B cell (primary cell): ENCODE measurements at regions of chr2 and their contacts with region 1.

Region 1: DNA sequence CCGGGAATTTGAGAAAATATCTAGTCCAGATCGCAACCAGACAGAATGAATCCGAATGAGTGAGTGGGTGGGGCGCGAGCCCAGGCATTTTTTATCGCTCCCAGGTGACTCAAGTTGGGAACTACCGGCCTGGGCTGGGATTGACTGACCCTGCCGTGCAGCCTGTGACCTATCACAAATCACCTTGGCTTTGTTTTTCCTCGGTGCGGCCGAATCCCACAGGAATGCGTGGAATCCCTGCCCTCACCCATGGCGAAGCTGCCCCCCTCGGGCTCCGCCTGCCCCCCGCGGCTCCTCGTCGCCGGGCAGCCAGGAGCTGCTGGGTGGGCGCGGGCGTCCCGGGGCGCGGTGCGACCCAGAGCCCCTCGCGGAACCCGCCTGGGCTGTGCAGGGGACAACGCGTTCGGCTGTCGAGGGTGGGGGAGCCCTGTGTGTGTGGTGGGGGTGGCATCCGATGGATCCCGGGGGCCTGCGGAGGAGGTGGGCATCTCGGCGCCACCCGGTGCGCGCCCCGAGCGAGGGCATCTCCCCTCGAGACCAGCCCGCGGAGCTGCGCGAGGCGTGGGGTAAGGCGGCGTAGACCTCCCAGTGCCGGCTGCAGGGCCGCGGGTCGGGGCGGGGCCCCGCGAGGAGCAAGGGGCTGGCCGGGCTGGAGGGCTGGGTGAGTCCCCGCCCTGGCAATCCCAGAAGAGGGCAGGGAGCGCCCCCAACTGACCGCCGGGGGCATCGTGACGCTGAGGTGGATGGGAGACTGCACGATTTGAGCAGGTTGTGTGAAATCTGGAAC is 16.5 kb downstream of the B3GNT7 start:
- DNase-seq: peak; percentile 88
- ATAC-seq: peak; percentile 100
- H3K4me3 ChIP-seq: peak overlapping the region in 4 of 5 experiments; percentile 10 to 62 (median 52)
- H3K4me3 Mint-ChIP-seq: peak overlapping the region; percentile 80
- H3K27ac ChIP-seq: no peak overlapping the region
- H3K27ac Mint-ChIP-seq: no peak overlapping the region
- H3K4me1 ChIP-seq: peaks cover 12 to 13% of the 10 kb centered on the region in 2 donors
- H3K4me1 Mint-ChIP-seq: peaks cover 7% of the 10 kb centered on the region
- H3K27me3 ChIP-seq: peaks cover 0 to 24% (median 10%) of the 10 kb centered on the region in 4 experiments
- H3K27me3 Mint-ChIP-seq: peaks cover 21% of the 10 kb centered on the region
- CTCF ChIP-seq: peak; percentile 87

Region 2: GRCh38 chr2:231104115-231104713 is 307.8 kb before region 1 on chr2:
- CTCF ChIA-PET with region 1: interaction called, 60 read pairs
- POLR2A ChIA-PET with region 1: no interaction called
- intact Hi-C with region 1: loop called (anchors 1 kb)
- DNase-seq: peak; percentile 73
- ATAC-seq: peak; percentile 69
- H3K4me3 ChIP-seq: no peak overlapping the region
- H3K4me3 Mint-ChIP-seq: no peak overlapping the region
- H3K27ac ChIP-seq: no peak overlapping the region
- H3K27ac Mint-ChIP-seq: no peak overlapping the region
- H3K4me1 ChIP-seq: no peaks in the 10 kb centered on the region
- H3K4me1 Mint-ChIP-seq: no peaks in the 10 kb centered on the region
- H3K27me3 ChIP-seq: no peaks in the 10 kb centered on the region
- H3K27me3 Mint-ChIP-seq: no peaks in the 10 kb centered on the region
- CTCF ChIP-seq: peak; percentile 87

Region 3: DNA sequence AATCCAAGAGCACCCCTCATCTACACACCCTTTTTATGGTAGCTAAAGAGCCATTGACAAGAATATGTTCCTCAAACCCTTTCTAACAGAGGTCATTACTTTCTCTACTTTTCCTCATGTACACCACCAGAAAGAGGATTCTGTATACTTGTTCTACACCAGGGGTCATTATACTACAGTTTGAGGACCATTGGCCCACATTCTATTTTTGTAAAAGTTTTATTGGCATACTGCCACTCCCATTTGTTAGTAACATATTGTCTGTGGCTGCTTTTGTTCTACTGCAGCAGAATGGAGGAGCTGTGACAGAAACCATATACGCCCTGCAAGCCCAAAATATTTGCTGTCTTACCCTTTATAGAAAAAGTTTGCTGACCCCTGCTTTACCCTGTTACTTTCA is 301.5 kb before region 1 on chr2:
- CTCF ChIA-PET with region 1: interaction called, 10 read pairs
- POLR2A ChIA-PET with region 1: no interaction called
- intact Hi-C with region 1: no loop called
- DNase-seq: no peak
- ATAC-seq: no peak
- H3K4me3 ChIP-seq: no peak overlapping the region
- H3K4me3 Mint-ChIP-seq: no peak overlapping the region
- H3K27ac ChIP-seq: no peak overlapping the region
- H3K27ac Mint-ChIP-seq: no peak overlapping the region
- H3K4me1 ChIP-seq: no peaks in the 10 kb centered on the region
- H3K4me1 Mint-ChIP-seq: no peaks in the 10 kb centered on the region
- H3K27me3 ChIP-seq: no peaks in the 10 kb centered on the region
- H3K27me3 Mint-ChIP-seq: no peaks in the 10 kb centered on the region
- CTCF ChIP-seq: no peak

Region 4: DNA sequence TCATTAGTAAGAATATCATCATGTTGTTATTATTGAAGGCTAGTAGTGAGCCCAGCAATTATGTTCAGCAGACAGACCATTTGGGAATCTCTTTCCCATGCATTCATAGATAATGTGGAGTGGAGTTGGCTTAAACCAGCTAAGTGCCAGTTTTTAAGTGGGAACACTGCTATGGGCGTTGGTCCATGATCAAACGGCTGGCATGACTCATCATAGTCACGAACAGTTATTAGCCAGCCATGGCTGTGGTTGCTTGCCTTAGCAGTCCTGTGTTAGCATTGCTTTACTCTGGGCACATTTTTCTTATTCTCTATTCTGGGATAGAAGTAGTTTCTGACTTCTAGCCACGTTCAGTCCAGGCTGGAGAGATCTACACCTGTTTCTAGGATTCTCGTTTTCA is 1156.1 kb after region 1 on chr2:
- CTCF ChIA-PET with region 1: no interaction called
- POLR2A ChIA-PET with region 1: no interaction called
- intact Hi-C with region 1: no loop called
- DNase-seq: no peak
- ATAC-seq: no peak
- H3K4me3 ChIP-seq: no peak overlapping the region
- H3K4me3 Mint-ChIP-seq: no peak overlapping the region
- H3K27ac ChIP-seq: no peak overlapping the region
- H3K27ac Mint-ChIP-seq: no peak overlapping the region
- H3K4me1 ChIP-seq: peaks cover 0 to 3% of the 10 kb centered on the region in 2 donors
- H3K4me1 Mint-ChIP-seq: peaks cover 3% of the 10 kb centered on the region
- H3K27me3 ChIP-seq: no peaks in the 10 kb centered on the region
- H3K27me3 Mint-ChIP-seq: no peaks in the 10 kb centered on the region
- CTCF ChIP-seq: no peak